ENCODE measurements at regions of chr3 and their contacts with region 1.

Region 1: DNA sequence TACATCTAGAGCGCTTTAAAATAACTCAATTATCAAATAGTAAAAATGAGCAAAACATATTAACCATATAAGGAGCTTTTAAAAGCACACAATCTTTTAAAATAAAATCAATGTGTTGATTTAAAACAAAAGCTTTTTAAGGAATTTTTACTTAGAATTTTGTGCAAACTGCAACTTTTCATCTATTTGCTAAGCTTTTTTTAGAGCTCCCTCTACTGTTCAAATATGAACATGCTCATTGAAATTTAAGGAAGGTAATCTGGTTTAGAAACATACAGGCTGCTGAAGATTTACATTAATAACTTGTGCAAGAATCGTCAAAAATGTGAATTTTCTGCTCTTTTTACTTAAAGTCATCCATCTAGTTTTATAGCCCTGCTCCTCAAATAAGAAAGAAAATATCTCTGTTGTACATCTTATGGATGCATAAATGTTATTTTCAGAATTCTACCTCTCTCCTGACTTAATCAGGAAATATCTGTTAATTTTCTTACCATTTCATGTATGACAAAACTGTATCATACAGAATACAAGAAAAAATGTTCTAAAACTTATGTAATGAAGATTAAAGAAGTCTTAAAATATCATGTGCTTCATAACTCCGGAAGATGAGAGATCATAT is 469.4 kb upstream of the ROBO2 start:
- DNase-seq: no peak
- H3K4me3 ChIP-seq: no peak overlapping the region
- H3K27ac ChIP-seq: no peak overlapping the region
- H3K4me1 ChIP-seq: no peaks in the 10 kb centered on the region
- H3K27me3 ChIP-seq: no peaks in the 10 kb centered on the region
- CTCF ChIP-seq: peak in 2 of 3 experiments; percentile 15 to 48; a peak in 2 of 4 replicates
- EP300 ChIP-seq: no peak
- POLR2A ChIP-seq: no peak
- RAD21 ChIP-seq: peak; percentile 41 to 55

Region 2: GRCh38 chr3:76551739-76552138 is 18.8 kb before region 1 on chr3:
- CTCF ChIA-PET with region 1: interaction called, 10 read pairs
- POLR2A ChIA-PET with region 1: no interaction called
- DNase-seq: no peak
- H3K4me3 ChIP-seq: no peak overlapping the region
- H3K27ac ChIP-seq: no peak overlapping the region
- H3K4me1 ChIP-seq: no peaks in the 10 kb centered on the region
- H3K27me3 ChIP-seq: no peaks in the 10 kb centered on the region
- CTCF ChIP-seq: no peak
- EP300 ChIP-seq: no peak
- POLR2A ChIP-seq: no peak
- RAD21 ChIP-seq: no peak

Region 3: DNA sequence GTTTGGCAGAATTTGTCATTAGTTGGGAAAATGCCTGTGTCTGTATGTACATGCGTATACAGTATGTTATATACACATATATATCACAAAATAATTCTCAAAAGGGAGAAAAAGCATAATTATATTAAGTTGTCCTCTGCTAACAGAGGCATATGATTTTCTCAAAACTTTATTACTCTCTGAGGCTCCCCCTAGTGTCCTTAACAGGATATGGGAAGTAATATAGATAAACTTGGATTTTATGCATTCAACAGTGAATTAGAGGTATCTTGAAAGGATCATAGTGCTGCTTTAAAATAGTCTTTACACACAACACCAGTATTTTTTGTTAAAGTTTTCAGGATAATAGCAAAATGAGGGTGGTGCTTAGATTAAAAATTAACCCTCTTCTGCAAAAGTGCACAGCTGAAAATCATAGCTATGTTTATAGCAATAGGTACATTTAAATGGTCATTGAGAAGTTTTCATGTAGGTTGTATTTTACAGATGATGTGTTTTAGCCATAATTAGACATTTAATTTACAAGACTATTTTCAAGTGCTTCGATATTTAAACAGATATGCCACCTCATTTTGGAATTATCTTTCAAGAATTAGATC is 15.3 kb after region 1 on chr3:
- CTCF ChIA-PET with region 1: interaction called, 14 read pairs
- POLR2A ChIA-PET with region 1: no interaction called
- DNase-seq: no peak
- H3K4me3 ChIP-seq: no peak overlapping the region
- H3K27ac ChIP-seq: no peak overlapping the region
- H3K4me1 ChIP-seq: no peaks in the 10 kb centered on the region
- H3K27me3 ChIP-seq: no peaks in the 10 kb centered on the region
- CTCF ChIP-seq: peak in 2 of 3 experiments; percentile 12 to 55; a peak in 2 of 4 replicates
- EP300 ChIP-seq: no peak
- POLR2A ChIP-seq: no peak
- RAD21 ChIP-seq: peak in 1 of 2 experiments; percentile 42; a peak in 3 of 4 replicates

Measured in H1 (cell line).